ENCODE measurements at regions of chr17 and their contacts with region 1.

Region 1: DNA sequence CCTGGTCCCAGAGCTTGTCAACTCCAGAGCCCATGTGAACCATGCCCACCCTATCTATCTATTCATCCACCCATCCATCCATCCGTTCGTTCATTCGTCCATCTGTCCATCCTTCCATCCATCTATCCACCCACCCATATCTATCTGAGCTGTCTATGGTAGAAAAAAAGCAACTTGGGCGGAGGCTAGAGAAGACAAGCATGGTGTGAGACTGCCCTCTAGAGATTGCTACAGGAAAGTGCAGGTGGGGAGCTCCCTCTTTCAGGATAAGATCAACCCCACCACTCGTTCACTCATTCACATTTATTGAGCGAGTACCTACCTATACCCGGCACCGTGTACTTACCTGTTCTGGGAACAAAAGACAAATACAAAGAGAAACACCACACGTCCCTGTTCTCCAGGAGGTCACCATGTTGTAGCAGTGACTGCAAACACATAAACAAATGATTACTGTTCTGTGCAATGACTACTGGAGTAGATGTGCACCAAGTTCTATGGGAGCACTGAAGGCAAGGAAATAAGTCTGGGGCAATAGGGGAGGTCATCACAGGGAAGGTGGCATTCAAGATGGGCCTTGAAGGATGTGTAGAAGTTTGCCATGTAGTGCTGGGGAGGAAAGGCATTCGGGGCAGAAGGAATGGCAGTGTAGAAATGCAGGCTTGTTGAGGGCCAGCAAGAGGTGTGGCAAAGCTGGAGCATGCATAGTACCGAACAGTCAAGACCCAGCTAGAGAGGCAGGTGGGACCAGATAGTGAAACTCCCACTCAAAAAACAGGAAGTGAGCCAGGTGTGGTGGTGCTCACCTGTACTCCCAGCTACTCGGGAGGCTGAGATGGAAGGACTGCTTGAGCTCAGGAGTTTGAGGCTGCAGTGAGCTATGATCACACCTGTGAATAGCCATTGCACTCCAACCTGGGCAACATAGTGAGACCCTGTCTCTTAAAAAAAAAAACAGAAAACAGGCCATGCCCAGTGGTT is 13.4 kb upstream of the ATP5MC1 start:
- DNase-seq: peak in 9 of 10 donors; percentile 39 to 78 (median 63)
- ATAC-seq: peak; percentile 82 to 90
- H3K4me3 Mint-ChIP-seq: no peak overlapping the region
- H3K27ac Mint-ChIP-seq: no peak overlapping the region
- H3K4me1 Mint-ChIP-seq: peaks cover 0 to 2% (median 0%) of the 10 kb centered on the region in 4 donors
- H3K27me3 Mint-ChIP-seq: peaks cover 0 to 9% (median 2%) of the 10 kb centered on the region in 5 donors

Region 2: GRCh38 chr17:48718761-48719641 is 160.2 kb before region 1 on chr17:
- POLR2A ChIA-PET with region 1: no interaction called
- DNase-seq: no peak
- ATAC-seq: peak; percentile 35 to 39
- H3K4me3 Mint-ChIP-seq: peak overlapping the region; percentile 4 to 63 (median 55)
- H3K27ac Mint-ChIP-seq: peak overlapping the region in 3 of 10 donors; percentile 25 to 85 (median 81)
- H3K4me1 Mint-ChIP-seq: peaks cover 11 to 27% (median 26%) of the 10 kb centered on the region in 4 donors
- H3K27me3 Mint-ChIP-seq: peaks cover 45 to 87% (median 74%) of the 10 kb centered on the region in 5 donors

Region 3: DNA sequence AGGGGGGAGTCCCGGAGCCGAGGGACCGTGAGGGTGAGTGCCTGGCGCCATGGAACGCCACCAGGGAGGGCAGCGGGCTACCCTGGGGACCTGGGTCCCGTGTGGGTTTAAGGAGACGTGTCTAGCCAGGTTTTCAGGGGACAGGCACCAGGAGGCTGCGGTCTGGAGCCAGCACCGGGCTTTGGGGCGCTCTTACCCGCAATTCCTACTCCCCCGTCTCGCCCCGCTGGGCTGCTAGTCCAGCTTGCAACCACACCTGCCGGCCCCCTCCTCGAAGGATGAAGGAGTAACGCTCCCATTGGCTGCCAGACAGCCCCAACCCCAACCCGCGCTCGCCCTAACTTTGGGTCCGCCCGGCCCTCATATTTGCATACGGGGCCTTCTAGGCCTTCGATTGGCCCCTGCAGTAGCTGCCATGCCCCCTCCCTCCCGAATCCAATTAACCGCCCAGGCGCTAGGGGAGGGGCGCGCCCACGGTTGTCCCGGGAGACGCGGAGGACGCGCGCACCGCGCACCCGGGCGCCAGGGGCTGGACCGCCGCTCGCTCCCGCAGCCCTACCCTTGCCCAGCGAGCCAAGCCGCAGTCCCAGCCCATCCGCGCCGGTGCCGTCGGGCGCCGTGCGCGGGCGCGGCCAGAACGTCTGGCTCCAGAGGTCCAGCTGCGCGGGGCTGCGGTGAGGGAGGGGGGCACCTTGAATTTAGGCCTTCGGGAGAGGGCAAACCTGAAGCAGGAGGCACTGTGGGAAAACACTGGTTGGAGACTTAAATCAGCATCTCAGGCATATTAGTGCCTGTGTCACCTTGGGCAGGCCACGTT is 62.2 kb before region 1 on chr17 and contains the start of gene TTLL6:
- POLR2A ChIA-PET with region 1: interaction called, 15 read pairs
- DNase-seq: peak; percentile 54 to 87 (median 78)
- ATAC-seq: peak; percentile 96 to 97
- H3K4me3 Mint-ChIP-seq: peak within 1 kb of the TSS; percentile 74 to 91 (median 84)
- H3K27ac Mint-ChIP-seq: peak within 1 kb of the TSS in 2 of 10 donors; percentile 63 to 65
- H3K4me1 Mint-ChIP-seq: peaks cover 12 to 22% (median 17%) of the 10 kb centered on the region in 4 donors
- H3K27me3 Mint-ChIP-seq: peaks cover 11 to 37% (median 26%) of the 10 kb centered on the region in 5 donors
- polyA plus RNA-seq, gene TTLL6: not detected